Activated B cell treated with CpG ODN at 0.5 μM for 24 hours (primary cell): ENCODE measurements at regions of chr3 and their contacts with region 1.

Region 1: DNA sequence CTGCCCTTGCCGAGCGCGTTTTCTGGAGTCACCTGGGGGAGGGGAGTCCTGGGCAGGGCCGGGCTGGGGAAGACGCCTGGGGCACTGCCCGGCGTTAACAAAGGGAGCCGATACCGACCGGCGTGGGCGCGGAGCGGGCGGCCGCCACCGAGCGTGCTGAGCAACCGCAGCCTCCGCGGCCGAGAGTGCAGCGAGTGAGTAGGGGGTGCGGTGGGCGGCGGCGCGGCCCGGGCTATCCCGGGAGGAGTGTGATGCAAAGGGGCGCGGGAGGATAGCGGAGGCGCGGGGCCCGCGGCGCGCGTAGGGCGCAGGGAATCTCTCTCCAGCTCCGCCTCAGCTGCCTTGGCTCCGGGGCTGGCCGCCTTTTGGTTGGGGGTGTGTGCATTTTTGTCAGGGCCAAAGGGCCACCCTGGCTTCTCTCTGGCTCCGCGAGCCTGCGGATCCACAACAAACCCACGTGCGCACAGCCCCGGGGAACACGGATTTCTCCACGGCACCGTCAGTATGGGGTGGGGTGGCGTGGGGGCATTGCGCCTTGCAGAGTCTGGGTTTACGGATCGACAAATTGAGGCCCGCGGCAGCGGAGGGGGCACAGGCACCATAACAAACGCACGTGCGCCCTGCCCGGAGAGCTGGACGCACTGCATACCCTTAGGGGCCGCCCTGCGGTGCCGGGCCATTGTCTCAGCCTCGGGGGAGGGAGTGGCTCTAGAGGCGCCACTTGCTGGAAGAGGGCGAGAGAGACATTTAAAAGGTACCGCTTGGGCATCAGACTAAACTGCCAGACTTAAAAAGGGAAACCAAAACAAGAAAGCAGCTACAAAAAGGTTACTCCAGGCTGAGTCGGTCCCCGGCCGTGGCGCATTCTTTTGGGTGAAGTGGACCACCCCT is 560 bp downstream of the ST6GAL1 start:
- DNase-seq: peak; percentile 65
- ATAC-seq: peak; percentile 83
- H3K4me3 Mint-ChIP-seq: peak overlapping the region; percentile 98
- H3K27ac Mint-ChIP-seq: peak overlapping the region; percentile 94
- H3K4me1 Mint-ChIP-seq: peaks cover 53% of the 10 kb centered on the region
- H3K27me3 Mint-ChIP-seq: no peaks in the 10 kb centered on the region
- CTCF ChIP-seq: no peak

Region 2: DNA sequence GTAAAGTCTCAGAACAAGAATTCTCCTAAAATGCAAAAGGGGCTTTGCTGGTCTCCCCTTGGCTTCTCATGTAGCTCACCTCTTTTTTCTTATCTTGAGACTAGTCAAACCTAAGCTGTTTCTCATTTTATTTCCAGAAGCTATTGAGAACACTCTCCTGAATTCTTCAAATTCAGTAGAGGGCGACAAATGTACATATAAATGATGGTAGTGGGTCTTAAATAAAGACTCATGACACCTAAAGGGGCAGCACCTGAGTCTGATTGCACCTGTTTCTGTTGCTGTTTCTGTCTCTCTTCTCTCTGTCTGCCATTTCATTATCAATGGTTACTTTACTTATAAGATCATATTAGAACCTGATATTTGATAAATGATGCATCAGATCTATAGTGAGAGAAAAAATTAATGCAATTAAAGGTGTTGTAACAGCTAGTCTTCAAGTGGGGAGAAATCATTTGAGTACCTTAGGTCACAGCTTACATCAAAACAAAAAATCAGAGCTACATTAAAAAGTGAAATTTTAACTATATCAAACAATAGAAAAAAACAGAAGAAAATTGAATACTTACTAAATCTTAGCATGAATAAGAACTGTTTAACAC is 81.4 kb before region 1 on chr3:
- CTCF ChIA-PET with region 1: interaction called, 54 read pairs
- POLR2A ChIA-PET with region 1: interaction called, 7 read pairs
- intact Hi-C with region 1: loop called (anchors 1 kb)
- DNase-seq: no peak
- ATAC-seq: peak; percentile 79
- H3K4me3 Mint-ChIP-seq: no peak overlapping the region
- H3K27ac Mint-ChIP-seq: peak overlapping the region; percentile 41
- H3K4me1 Mint-ChIP-seq: peaks cover 13% of the 10 kb centered on the region
- H3K27me3 Mint-ChIP-seq: peaks cover 10% of the 10 kb centered on the region
- CTCF ChIP-seq: no peak

Region 3: DNA sequence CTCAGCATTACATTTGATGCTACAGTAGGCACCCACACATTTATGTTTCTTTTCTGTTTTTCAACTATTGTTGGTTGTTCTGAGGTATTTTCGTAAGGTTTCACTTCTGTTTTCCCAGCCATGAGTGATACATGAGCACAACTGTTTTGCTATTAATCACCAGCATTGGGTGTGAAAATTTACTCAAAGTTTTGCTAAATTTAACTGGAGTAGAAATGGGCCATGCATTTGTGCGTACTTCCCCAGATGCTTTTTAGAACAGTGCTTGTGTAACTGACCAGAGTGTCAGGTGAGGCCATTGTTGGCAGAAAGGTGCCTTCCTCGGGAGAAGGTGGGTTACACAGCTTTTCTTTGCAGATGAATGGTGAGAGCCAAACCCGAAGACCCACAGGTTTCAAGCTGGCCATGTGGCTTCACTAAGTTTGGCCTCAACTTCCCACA is 69.8 kb after region 1 on chr3:
- CTCF ChIA-PET with region 1: interaction called, 4 read pairs
- POLR2A ChIA-PET with region 1: interaction called, 11 read pairs
- intact Hi-C with region 1: loop called (anchors 2 kb)
- DNase-seq: peak; percentile 43
- ATAC-seq: peak; percentile 66
- H3K4me3 Mint-ChIP-seq: peak overlapping the region; percentile 72
- H3K27ac Mint-ChIP-seq: peak overlapping the region; percentile 89
- H3K4me1 Mint-ChIP-seq: peaks cover 94% of the 10 kb centered on the region
- H3K27me3 Mint-ChIP-seq: no peaks in the 10 kb centered on the region
- CTCF ChIP-seq: no peak

Region 4: GRCh38 chr3:187031934-187032333 is 101.0 kb after region 1 on chr3:
- CTCF ChIA-PET with region 1: interaction called, 4 read pairs
- POLR2A ChIA-PET with region 1: interaction called, 77 read pairs
- intact Hi-C with region 1: loop called (anchors 1 kb)
- DNase-seq: no peak
- ATAC-seq: no peak
- H3K4me3 Mint-ChIP-seq: peak overlapping the region; percentile 69
- H3K27ac Mint-ChIP-seq: peak overlapping the region; percentile 86
- H3K4me1 Mint-ChIP-seq: peaks cover 90% of the 10 kb centered on the region
- H3K27me3 Mint-ChIP-seq: no peaks in the 10 kb centered on the region
- CTCF ChIP-seq: no peak

Region 5: GRCh38 chr3:187112934-187113793 is 182.3 kb after region 1 on chr3:
- CTCF ChIA-PET with region 1: interaction called, 4 read pairs
- POLR2A ChIA-PET with region 1: interaction called, 10 read pairs
- intact Hi-C with region 1: no loop called
- DNase-seq: no peak
- ATAC-seq: peak; percentile 49
- H3K4me3 Mint-ChIP-seq: no peak overlapping the region
- H3K27ac Mint-ChIP-seq: no peak overlapping the region
- H3K4me1 Mint-ChIP-seq: peaks cover 9% of the 10 kb centered on the region
- H3K27me3 Mint-ChIP-seq: no peaks in the 10 kb centered on the region
- CTCF ChIP-seq: no peak

Region 6: GRCh38 chr3:187150599-187150998 is 219.7 kb after region 1 on chr3:
- CTCF ChIA-PET with region 1: no interaction called
- POLR2A ChIA-PET with region 1: no interaction called
- intact Hi-C with region 1: loop called (anchors 5 kb)
- DNase-seq: peak; percentile 54
- ATAC-seq: peak; percentile 66
- H3K4me3 Mint-ChIP-seq: no peak overlapping the region
- H3K27ac Mint-ChIP-seq: no peak overlapping the region
- H3K4me1 Mint-ChIP-seq: no peaks in the 10 kb centered on the region
- H3K27me3 Mint-ChIP-seq: peaks cover 5% of the 10 kb centered on the region
- CTCF ChIP-seq: no peak